ENCODE measurements at regions of chr7 and their contacts with region 1.

Region 1: GRCh38 chr7:30585675-30586074 is 9.0 kb upstream of the GARS1 start:
- DNase-seq: no peak
- CTCF ChIP-seq: no peak

Region 2: GRCh38 chr7:30406664-30407425 is 178.8 kb before region 1 on chr7:
- CTCF ChIA-PET with region 1: no interaction called
- POLR2A ChIA-PET with region 1: no interaction called
- DNase-seq: no peak
- CTCF ChIP-seq: no peak

Region 3: GRCh38 chr7:30543813-30544590 is 41.7 kb before region 1 on chr7:
- CTCF ChIA-PET with region 1: no interaction called
- POLR2A ChIA-PET with region 1: no interaction called
- DNase-seq: no peak
- CTCF ChIP-seq: no peak

Region 4: GRCh38 chr7:30572212-30572841 is 13.3 kb before region 1 on chr7:
- CTCF ChIA-PET with region 1: interaction called, 14 read pairs
- POLR2A ChIA-PET with region 1: no interaction called
- DNase-seq: no peak
- CTCF ChIP-seq: no peak

Region 5: GRCh38 chr7:30612658-30613265 is 27.1 kb after region 1 on chr7:
- CTCF ChIA-PET with region 1: no interaction called
- POLR2A ChIA-PET with region 1: no interaction called
- DNase-seq: no peak
- CTCF ChIP-seq: no peak

Measured in GM10248 (cell line).